A549 (cell line): ENCODE measurements at regions of chr14 and their contacts with region 1.

Region 1: DNA sequence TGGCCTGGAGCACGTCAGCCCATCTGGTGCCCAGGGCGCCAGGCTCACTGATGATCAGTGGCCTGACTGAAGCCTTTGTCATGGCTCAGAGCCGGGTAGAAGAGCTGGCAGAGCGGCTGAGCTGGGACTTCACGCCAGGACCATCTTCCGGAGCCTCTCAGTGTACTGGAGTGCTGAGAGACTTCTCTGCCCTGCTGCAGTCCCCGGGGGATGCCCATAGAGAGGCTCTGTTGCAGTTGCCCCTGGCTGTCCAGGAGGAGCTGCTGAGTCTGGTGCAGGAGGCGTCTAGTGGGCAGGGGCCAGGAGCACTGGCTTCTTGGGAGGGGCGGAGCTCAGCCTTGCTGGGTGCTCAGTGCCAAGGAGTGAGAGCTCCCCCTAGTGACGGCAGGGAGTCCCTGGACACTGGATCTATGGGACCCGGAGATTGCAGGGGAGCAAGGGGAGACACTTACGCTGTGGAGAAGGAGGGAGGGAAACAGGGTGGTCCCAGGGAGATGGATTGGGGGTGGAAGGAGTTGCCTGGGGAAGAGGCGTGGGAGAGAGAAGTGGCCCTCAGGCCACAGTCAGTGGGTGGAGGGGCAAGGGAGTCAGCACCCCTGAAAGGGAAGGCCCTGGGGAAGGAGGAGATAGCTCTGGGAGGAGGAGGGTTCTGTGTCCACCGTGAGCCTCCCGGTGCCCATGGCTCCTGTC is 2.0 kb downstream of the KHNYN start:
- DNase-seq: peak; percentile 93 to 95
- ATAC-seq: peak; percentile 72 to 87
- H3K4me3 ChIP-seq: peak overlapping the region; percentile 86; the same call in 2 of the 3 replicates
- H3K27ac ChIP-seq: peak overlapping the region; percentile 97 to 99; a peak in 5 of 6 replicates
- H3K4me1 ChIP-seq: peaks cover 14% of the 10 kb centered on the region
- CTCF ChIP-seq: peak; percentile 90
- EP300 ChIP-seq: no peak
- POLR2A ChIP-seq: no peak
- RAD21 ChIP-seq: peak; percentile 88 to 93

Region 2: GRCh38 chr14:24310646-24311604 is 120.8 kb before region 1 on chr14 and contains the start of gene LTB4R:
- CTCF ChIA-PET with region 1: interaction called, 1,142 read pairs
- POLR2A ChIA-PET with region 1: interaction called, 11 read pairs
- DNase-seq: no peak
- ATAC-seq: no peak
- H3K4me3 ChIP-seq: no peak within 1 kb of the TSS
- H3K27ac ChIP-seq: no peak within 1 kb of the TSS
- H3K4me1 ChIP-seq: peaks cover 16% of the 10 kb centered on the region
- CTCF ChIP-seq: no peak
- EP300 ChIP-seq: no peak
- POLR2A ChIP-seq: no peak
- RAD21 ChIP-seq: no peak
- polyA plus RNA-seq, gene LTB4R: 10.2 and 13.2 TPM in 2 replicates

Region 3: DNA sequence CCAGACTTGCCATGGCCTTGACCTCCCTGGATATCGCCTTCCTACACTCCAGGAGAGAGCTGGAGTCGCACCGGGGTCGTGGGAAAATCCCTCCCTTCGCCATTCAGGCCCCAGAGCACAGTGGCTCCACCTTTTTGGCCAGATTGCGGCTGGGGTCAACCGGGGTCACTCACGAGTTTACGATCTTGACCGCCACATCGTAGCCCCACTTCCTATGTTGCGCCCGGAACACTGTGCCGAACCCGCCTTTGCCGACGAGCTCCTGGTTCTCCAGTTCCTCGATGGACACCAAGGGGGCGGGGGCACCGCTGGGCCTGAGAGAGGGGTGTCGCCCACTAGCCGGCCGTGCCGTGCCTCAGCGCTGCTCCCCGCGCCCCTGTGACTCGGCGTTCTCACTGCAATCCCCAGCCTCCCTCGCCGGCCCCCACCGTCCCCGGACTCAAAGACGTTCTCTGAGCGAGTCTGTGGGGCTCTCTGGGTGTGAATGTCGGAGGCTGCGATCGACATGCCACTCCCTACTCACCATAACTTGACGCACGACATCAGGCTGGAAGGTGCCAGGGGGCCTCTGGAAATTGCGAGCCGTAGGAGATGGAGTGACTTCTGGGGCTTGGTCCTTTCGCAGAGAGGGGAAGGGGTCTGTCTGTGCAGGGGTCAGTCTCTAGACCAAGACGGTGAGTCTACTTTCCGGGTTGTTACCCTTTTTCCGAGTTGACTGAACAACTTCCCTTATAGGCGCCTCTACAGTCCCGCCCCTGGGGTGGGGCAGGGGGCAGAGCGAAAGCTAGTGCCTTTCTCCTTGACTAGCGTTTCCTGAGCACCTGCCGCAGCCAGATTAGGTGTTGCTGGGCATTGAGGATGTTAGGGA is 92.2 kb before region 1 on chr14 and contains the start of gene RIPK3:
- CTCF ChIA-PET with region 1: interaction called, 1,142 read pairs
- POLR2A ChIA-PET with region 1: interaction called, 12 read pairs
- DNase-seq: no peak
- ATAC-seq: no peak
- H3K4me3 ChIP-seq: no peak within 1 kb of the TSS
- H3K27ac ChIP-seq: no peak within 1 kb of the TSS
- H3K4me1 ChIP-seq: no peaks in the 10 kb centered on the region
- CTCF ChIP-seq: no peak
- EP300 ChIP-seq: no peak
- POLR2A ChIP-seq: no peak
- RAD21 ChIP-seq: no peak
- polyA plus RNA-seq, gene RIPK3: not detected in 2 replicates

Region 4: DNA sequence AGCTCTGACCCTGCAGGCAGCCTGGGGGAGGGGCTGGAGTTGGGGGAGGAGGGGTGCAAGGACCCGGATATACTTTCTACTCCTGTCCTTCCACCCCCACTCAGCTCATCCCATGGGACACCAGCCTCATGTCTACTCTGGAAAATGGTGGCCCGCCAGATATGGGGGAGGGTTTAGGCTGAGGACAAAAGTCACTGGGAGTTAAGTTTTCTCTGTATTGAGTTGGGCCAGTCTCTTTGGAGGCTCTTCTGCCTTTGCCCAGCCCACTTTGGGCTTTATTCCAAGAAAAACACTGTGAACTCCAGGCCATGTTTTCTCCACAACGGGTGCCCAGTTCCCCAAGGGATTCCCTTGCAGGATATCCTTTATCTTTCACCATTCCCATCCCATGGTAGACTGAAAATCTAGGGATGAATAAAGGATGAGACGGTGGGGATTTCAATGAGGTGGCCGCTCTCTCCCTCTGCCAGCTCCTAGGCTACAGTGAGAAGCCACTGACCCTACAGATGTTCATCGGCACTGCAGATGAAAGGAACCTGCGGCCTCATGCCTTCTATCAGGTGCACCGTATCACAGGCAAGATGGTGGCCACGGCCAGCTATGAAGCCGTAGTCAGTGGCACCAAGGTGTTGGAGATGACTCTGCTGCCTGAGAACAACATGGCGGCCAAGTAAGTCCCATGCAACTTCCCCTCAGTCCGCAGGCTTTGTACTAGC is 58.9 kb before region 1 on chr14:
- CTCF ChIA-PET with region 1: interaction called, 19 read pairs
- POLR2A ChIA-PET with region 1: interaction called, 15 read pairs
- DNase-seq: no peak
- ATAC-seq: no peak
- H3K4me3 ChIP-seq: no peak overlapping the region
- H3K27ac ChIP-seq: no peak overlapping the region
- H3K4me1 ChIP-seq: peaks cover 2% of the 10 kb centered on the region; the same call in 2 of the 3 replicates
- CTCF ChIP-seq: no peak
- EP300 ChIP-seq: no peak
- POLR2A ChIP-seq: no peak
- RAD21 ChIP-seq: no peak

Region 5: GRCh38 chr14:24398653-24399446 is 32.9 kb before region 1 on chr14 and contains the start of gene NYNRIN:
- CTCF ChIA-PET with region 1: interaction called, 16 read pairs
- POLR2A ChIA-PET with region 1: interaction called, 8 read pairs
- DNase-seq: no peak
- ATAC-seq: peak; percentile 44 to 80; a peak in 4 of 6 replicates
- H3K4me3 ChIP-seq: peak within 1 kb of the TSS; percentile 65
- H3K27ac ChIP-seq: peak within 1 kb of the TSS; percentile 74 to 85
- H3K4me1 ChIP-seq: peaks cover 16% of the 10 kb centered on the region; the same call in 1 of the 3 replicates
- CTCF ChIP-seq: no peak
- EP300 ChIP-seq: no peak
- POLR2A ChIP-seq: no peak
- RAD21 ChIP-seq: no peak
- polyA plus RNA-seq, gene NYNRIN: 0.44 and 0.60 TPM in 2 replicates

Region 6: GRCh38 chr14:24442273-24443052 is 10.7 kb after region 1 on chr14 and contains the start of gene SDR39U1:
- CTCF ChIA-PET with region 1: interaction called, 41 read pairs
- POLR2A ChIA-PET with region 1: interaction called, 15 read pairs
- DNase-seq: peak; percentile 95 to 99
- ATAC-seq: peak; percentile 87 to 94
- H3K4me3 ChIP-seq: peak within 1 kb of the TSS; percentile 86
- H3K27ac ChIP-seq: peak within 1 kb of the TSS; percentile 97 to 98
- H3K4me1 ChIP-seq: peaks cover 6% of the 10 kb centered on the region
- CTCF ChIP-seq: no peak
- EP300 ChIP-seq: no peak
- POLR2A ChIP-seq: peak; percentile 85
- RAD21 ChIP-seq: no peak
- polyA plus RNA-seq, gene SDR39U1: 57.3 and 64.4 TPM in 2 replicates

Region 7: GRCh38 chr14:24597403-24597802 is 165.7 kb after region 1 on chr14:
- CTCF ChIA-PET with region 1: no interaction called
- POLR2A ChIA-PET with region 1: no interaction called
- DNase-seq: no peak
- ATAC-seq: no peak
- H3K4me3 ChIP-seq: no peak overlapping the region
- H3K27ac ChIP-seq: no peak overlapping the region
- H3K4me1 ChIP-seq: no peaks in the 10 kb centered on the region
- CTCF ChIP-seq: no peak
- EP300 ChIP-seq: no peak
- POLR2A ChIP-seq: no peak
- RAD21 ChIP-seq: no peak

Region 8: GRCh38 chr14:24761141-24761540 is 329.4 kb after region 1 on chr14:
- CTCF ChIA-PET with region 1: no interaction called
- POLR2A ChIA-PET with region 1: no interaction called
- DNase-seq: no peak
- ATAC-seq: no peak
- H3K4me3 ChIP-seq: no peak overlapping the region
- H3K27ac ChIP-seq: no peak overlapping the region
- H3K4me1 ChIP-seq: no peaks in the 10 kb centered on the region
- CTCF ChIP-seq: no peak
- EP300 ChIP-seq: no peak
- POLR2A ChIP-seq: no peak
- RAD21 ChIP-seq: no peak

Region 9: DNA sequence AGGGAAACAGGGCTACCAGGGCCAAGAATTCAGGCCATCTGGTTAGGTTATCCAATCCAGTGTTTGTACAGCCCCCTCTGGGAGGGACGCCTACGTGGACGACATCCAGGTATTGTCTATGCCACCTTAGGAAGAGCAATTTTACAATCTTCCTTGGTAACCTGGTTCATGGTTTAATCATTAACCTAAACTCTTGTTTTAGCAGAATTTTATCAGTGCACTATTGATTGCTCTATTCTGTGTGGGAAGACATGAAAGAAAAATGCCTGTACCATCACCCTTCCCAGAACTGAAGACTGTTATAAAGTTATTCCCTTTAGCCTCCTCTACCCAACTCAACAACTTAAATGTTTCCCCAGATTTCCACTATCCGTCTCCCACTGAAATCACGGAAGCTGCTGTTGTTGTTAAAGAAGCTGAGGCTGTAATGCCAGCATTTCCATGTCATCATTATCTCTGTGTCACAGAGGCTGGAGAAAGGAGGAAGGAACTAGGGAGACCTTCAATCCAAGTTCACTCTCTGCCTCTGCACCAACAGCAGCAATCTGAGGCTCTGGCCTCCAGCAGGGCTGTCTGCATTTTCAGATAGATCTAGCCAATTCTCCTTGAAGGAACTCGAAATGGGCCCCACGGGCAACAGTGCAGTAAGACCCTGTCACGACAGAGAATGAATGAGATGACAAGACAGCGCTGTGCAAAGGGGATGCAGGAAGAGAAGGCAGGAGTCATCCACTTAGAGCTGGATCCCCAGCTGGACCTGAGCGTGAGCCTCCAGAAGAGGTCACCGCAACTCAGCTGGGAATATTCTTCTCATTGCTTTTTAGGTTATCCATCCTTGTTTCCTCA is 385.7 kb after region 1 on chr14:
- CTCF ChIA-PET with region 1: no interaction called
- POLR2A ChIA-PET with region 1: no interaction called
- DNase-seq: peak in 1 of 2 experiments; percentile 24
- ATAC-seq: peak; percentile 62 to 63; a peak in 4 of 6 replicates
- H3K4me3 ChIP-seq: no peak overlapping the region
- H3K27ac ChIP-seq: no peak overlapping the region
- H3K4me1 ChIP-seq: peaks cover 12% of the 10 kb centered on the region; the same call in 1 of the 3 replicates
- CTCF ChIP-seq: 0 out of 3 replicates have a peak, but pooled peaks have one; percentile 23
- EP300 ChIP-seq: no peak
- POLR2A ChIP-seq: no peak
- RAD21 ChIP-seq: peak; percentile 40 to 47